ENCODE measurements at regions of chr6 and their contacts with region 1.

Region 1: GRCh38 chr6:27809939-27810767 is 102.0 kb downstream of the OR2B2 start:
- DNase-seq: peak; percentile 66 to 96 (median 92)
- ATAC-seq: peak; percentile 71
- H3K4me3 ChIP-seq: peak overlapping the region; percentile 76
- H3K4me3 Mint-ChIP-seq: peak overlapping the region; percentile 81 to 97 (median 94)
- H3K27ac ChIP-seq: peak overlapping the region; percentile 86
- H3K27ac Mint-ChIP-seq: peak overlapping the region; percentile 95 to 99 (median 98)
- H3K4me1 ChIP-seq: peaks cover 20 to 42% of the 10 kb centered on the region in 2 donors
- H3K4me1 Mint-ChIP-seq: peaks cover 18 to 82% (median 61%) of the 10 kb centered on the region in 7 donors
- H3K27me3 ChIP-seq: no peaks in the 10 kb centered on the region
- H3K27me3 Mint-ChIP-seq: peaks cover 0 to 9% (median 0%) of the 10 kb centered on the region in 5 donors

Region 2: GRCh38 chr6:26054857-26055669 is 1755.1 kb before region 1 on chr6:
- CTCF ChIA-PET with region 1: no interaction called
- POLR2A ChIA-PET with region 1: interaction called, 10 read pairs
- intact Hi-C with region 1: no loop called
- DNase-seq: peak; percentile 54 to 94 (median 90)
- ATAC-seq: peak; percentile 81
- H3K4me3 ChIP-seq: peak overlapping the region; percentile 93
- H3K4me3 Mint-ChIP-seq: peak overlapping the region; percentile 88 to 99 (median 95)
- H3K27ac ChIP-seq: peak overlapping the region; percentile 83
- H3K27ac Mint-ChIP-seq: peak overlapping the region; percentile 95 to 99 (median 98)
- H3K4me1 ChIP-seq: peaks cover 0 to 14% of the 10 kb centered on the region in 2 donors
- H3K4me1 Mint-ChIP-seq: peaks cover 9 to 52% (median 10%) of the 10 kb centered on the region in 7 donors
- H3K27me3 ChIP-seq: no peaks in the 10 kb centered on the region
- H3K27me3 Mint-ChIP-seq: peaks cover 0 to 10% (median 0%) of the 10 kb centered on the region in 5 donors

Region 3: GRCh38 chr6:27138837-27139755 is 671.1 kb before region 1 on chr6:
- CTCF ChIA-PET with region 1: interaction called, 5 read pairs
- POLR2A ChIA-PET with region 1: interaction called, 122 read pairs
- intact Hi-C with region 1: no loop called
- DNase-seq: peak; percentile 39 to 78 (median 67)
- ATAC-seq: peak; percentile 90
- H3K4me3 ChIP-seq: peak overlapping the region; percentile 74
- H3K4me3 Mint-ChIP-seq: peak overlapping the region; percentile 90 to 99 (median 98)
- H3K27ac ChIP-seq: peak overlapping the region; percentile 86
- H3K27ac Mint-ChIP-seq: peak overlapping the region; percentile 97 to 99 (median 98)
- H3K4me1 ChIP-seq: peaks cover 19 to 26% of the 10 kb centered on the region in 2 donors
- H3K4me1 Mint-ChIP-seq: peaks cover 29 to 80% (median 60%) of the 10 kb centered on the region in 7 donors
- H3K27me3 ChIP-seq: no peaks in the 10 kb centered on the region
- H3K27me3 Mint-ChIP-seq: no peaks in the 10 kb centered on the region

Region 4: GRCh38 chr6:27795697-27796494 is 14.3 kb before region 1 on chr6:
- CTCF ChIA-PET with region 1: interaction called, 12 read pairs
- POLR2A ChIA-PET with region 1: interaction called, 51 read pairs
- intact Hi-C with region 1: loop called (anchors 1 kb)
- DNase-seq: peak in 8 of 9 donors; percentile 36 to 83 (median 78)
- ATAC-seq: peak; percentile 86
- H3K4me3 ChIP-seq: no peak overlapping the region
- H3K4me3 Mint-ChIP-seq: peak overlapping the region in 2 of 10 donors; percentile 30 to 42
- H3K27ac ChIP-seq: no peak overlapping the region
- H3K27ac Mint-ChIP-seq: peak overlapping the region in 6 of 9 donors; percentile 11 to 86 (median 38)
- H3K4me1 ChIP-seq: peaks cover 14 to 24% of the 10 kb centered on the region in 2 donors
- H3K4me1 Mint-ChIP-seq: peaks cover 12 to 49% (median 22%) of the 10 kb centered on the region in 7 donors
- H3K27me3 ChIP-seq: no peaks in the 10 kb centered on the region
- H3K27me3 Mint-ChIP-seq: peaks cover 7 to 13% (median 12%) of the 10 kb centered on the region in 5 donors

Region 5: DNA sequence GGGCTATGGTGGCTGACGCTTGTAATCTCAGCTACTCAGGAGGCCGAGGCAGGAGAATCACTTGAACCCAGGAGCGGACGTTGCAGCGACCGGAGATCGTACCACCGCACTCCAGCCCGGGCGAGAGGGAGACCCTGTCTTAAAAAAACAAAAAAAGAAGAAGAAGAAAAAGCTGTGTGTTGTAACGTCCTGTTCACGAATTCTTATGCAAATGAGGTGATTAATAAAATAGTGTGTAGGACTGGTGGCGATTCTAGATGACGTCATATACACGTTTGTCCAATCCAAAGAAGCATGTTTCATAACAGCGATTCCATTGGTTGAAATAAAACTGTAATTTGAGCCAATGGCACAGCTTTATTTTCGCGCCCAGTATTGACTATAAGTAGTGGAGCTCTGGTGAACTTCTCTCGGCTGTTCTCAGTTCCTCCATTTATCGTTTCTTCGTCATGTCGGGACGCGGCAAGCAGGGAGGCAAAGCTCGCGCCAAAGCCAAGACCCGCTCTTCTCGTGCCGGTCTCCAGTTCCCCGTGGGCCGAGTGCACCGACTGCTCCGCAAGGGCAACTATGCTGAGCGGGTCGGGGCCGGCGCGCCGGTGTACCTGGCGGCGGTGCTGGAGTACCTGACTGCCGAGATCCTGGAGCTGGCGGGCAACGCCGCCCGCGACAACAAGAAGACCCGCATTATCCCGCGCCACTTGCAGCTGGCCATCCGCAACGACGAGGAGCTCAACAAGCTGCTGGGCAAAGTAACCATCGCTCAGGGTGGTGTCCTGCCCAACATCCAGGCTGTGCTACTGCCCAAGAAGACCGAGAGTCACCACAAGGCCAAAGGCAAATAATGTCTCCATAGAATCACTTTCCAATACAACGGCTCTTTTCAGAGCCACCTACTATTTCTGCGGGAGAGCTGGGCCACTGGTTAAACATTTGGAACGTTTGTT is 55.0 kb after region 1 on chr6:
- CTCF ChIA-PET with region 1: interaction called, 15 read pairs
- POLR2A ChIA-PET with region 1: interaction called, 588 read pairs
- intact Hi-C with region 1: loop called (anchors 1 to 2 kb)
- DNase-seq: peak; percentile 56 to 93 (median 89)
- ATAC-seq: peak; percentile 85
- H3K4me3 ChIP-seq: peak overlapping the region; percentile 74
- H3K4me3 Mint-ChIP-seq: peak overlapping the region; percentile 85 to 99 (median 97)
- H3K27ac ChIP-seq: peak overlapping the region; percentile 71
- H3K27ac Mint-ChIP-seq: peak overlapping the region; percentile 88 to 98 (median 95)
- H3K4me1 ChIP-seq: peaks cover 8 to 25% of the 10 kb centered on the region in 2 donors
- H3K4me1 Mint-ChIP-seq: peaks cover 22 to 64% (median 46%) of the 10 kb centered on the region in 7 donors
- H3K27me3 ChIP-seq: no peaks in the 10 kb centered on the region
- H3K27me3 Mint-ChIP-seq: peaks cover 0 to 16% (median 0%) of the 10 kb centered on the region in 5 donors

Region 6: GRCh38 chr6:28207510-28208110 is 397.5 kb after region 1 on chr6:
- CTCF ChIA-PET with region 1: no interaction called
- POLR2A ChIA-PET with region 1: no interaction called
- intact Hi-C with region 1: no loop called
- DNase-seq: peak in 1 of 9 donors; percentile 44
- ATAC-seq: peak; percentile 40
- H3K4me3 ChIP-seq: no peak overlapping the region
- H3K4me3 Mint-ChIP-seq: peak overlapping the region; percentile 30 to 87 (median 54)
- H3K27ac ChIP-seq: no peak overlapping the region
- H3K27ac Mint-ChIP-seq: peak overlapping the region in 1 of 9 donors; percentile 40
- H3K4me1 ChIP-seq: peaks cover 12 to 13% of the 10 kb centered on the region in 2 donors
- H3K4me1 Mint-ChIP-seq: peaks cover 6 to 29% (median 25%) of the 10 kb centered on the region in 7 donors
- H3K27me3 ChIP-seq: peaks cover 46 to 60% of the 10 kb centered on the region in 2 donors
- H3K27me3 Mint-ChIP-seq: peaks cover 81 to 97% (median 86%) of the 10 kb centered on the region in 5 donors

Region 7: DNA sequence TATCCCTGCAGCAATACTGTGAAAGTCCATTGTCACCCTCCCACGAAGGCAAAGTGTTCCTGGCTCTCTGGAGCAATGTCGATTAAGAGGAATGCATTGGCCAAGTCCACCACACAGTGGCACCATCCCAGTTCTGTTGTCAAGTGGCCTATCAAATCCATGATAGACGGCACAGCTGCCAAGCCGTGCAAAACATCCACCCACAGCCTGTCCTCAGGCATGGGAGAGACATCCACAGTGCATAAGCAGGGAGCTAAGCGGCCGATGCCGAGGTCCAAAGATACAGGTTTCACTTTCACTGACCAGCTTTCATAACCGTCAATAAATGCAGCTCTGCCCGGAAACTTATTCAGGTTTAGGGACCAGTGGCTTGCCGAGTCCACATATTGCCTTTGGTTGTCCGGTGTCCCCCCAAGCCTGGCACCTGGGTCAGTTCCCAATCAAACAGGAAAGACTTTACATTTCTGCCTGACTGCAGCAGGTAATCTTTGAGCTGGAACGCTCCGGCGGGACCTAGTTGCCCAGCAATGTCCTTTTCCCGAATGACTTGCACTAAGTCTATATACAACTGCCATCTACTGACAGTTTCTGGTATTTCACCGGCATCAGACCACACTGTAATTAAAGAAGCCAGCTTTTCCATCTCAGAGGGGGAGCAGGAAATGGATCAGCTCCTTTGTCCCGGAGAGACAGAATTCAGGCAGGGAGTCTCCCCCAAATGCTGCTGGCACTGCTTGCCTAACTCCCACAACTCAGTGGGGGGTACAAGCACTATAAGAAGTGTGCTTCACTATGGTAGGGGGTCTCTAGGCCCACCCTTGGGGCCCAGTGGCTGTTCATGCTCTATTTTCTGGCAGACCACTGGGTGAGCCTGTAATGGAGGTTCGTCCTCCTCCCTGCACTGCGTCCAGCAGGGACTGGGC is 545.9 kb after region 1 on chr6:
- CTCF ChIA-PET with region 1: no interaction called
- POLR2A ChIA-PET with region 1: no interaction called
- intact Hi-C with region 1: loop called (anchors 5 to 10 kb)
- DNase-seq: peak; percentile 26 to 69 (median 54)
- ATAC-seq: peak; percentile 92
- H3K4me3 ChIP-seq: peak overlapping the region; percentile 69
- H3K4me3 Mint-ChIP-seq: peak overlapping the region; percentile 78 to 96 (median 92)
- H3K27ac ChIP-seq: no peak overlapping the region
- H3K27ac Mint-ChIP-seq: peak overlapping the region; percentile 21 to 89 (median 62)
- H3K4me1 ChIP-seq: peaks cover 0 to 7% of the 10 kb centered on the region in 2 donors
- H3K4me1 Mint-ChIP-seq: peaks cover 16 to 38% (median 34%) of the 10 kb centered on the region in 7 donors
- H3K27me3 ChIP-seq: no peaks in the 10 kb centered on the region
- H3K27me3 Mint-ChIP-seq: no peaks in the 10 kb centered on the region

Measured in naive thymus-derived CD4-positive, alpha-beta T cell (primary cell).